ENCODE measurements at regions of chr11 and their contacts with region 1.

Region 1: DNA sequence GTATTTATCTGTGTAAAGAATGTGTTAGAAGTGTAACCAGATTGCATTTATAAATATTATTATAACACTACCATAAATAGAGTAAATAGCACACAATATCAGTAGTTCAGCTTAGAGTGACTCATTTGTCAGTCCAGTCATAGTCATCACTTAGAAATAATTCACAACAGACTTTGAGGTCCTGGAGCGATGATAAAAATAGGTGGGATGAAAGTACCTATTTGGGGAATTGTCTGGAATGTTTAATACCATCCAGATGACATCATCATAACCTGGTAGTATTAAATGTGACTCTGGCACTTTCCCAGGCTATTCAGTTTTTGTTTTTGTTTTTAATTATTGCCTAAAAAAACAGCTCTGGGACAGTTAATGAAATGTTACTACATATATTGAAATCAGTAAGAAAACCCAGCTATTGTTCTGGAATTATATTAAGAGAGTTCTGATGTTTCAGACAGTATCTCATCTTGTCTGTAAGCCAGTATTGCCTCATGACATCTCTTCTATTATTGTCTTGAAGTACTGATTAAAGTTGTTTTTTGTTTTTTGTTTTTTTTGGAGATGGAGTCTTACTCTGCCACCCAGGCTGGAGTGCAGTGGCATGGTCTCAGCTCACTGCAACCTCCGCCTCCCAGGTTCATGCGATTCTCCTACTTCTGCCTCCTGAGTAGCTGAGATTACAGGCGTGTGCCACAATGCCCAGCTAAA is 74.8 kb downstream of the SIK2 start:
- DNase-seq: peak; percentile 48
- H3K4me3 ChIP-seq: no peak overlapping the region
- H3K27ac ChIP-seq: no peak overlapping the region
- H3K4me1 ChIP-seq: peaks cover 7% of the 10 kb centered on the region
- H3K27me3 ChIP-seq: no peaks in the 10 kb centered on the region
- CTCF ChIP-seq: no peak
- POLR2A ChIP-seq: no peak

Region 2: GRCh38 chr11:111540114-111540936 is 136.7 kb before region 1 on chr11 and contains the start of gene LAYN:
- CTCF ChIA-PET with region 1: no interaction called
- POLR2A ChIA-PET with region 1: no interaction called
- dilution Hi-C with region 1: no loop called
- intact Hi-C with region 1: no loop called
- DNase-seq: no peak
- H3K4me3 ChIP-seq: peak within 1 kb of the TSS; percentile 6 to 44 (median 38)
- H3K27ac ChIP-seq: no peak within 1 kb of the TSS
- H3K4me1 ChIP-seq: peaks cover 17% of the 10 kb centered on the region
- H3K27me3 ChIP-seq: peaks cover 47 to 60% of the 10 kb centered on the region in 2 experiments
- CTCF ChIP-seq: no peak
- POLR2A ChIP-seq: no peak
- total RNA-seq, gene LAYN: 2.2 and 2.3 TPM in 2 replicates

Region 3: DNA sequence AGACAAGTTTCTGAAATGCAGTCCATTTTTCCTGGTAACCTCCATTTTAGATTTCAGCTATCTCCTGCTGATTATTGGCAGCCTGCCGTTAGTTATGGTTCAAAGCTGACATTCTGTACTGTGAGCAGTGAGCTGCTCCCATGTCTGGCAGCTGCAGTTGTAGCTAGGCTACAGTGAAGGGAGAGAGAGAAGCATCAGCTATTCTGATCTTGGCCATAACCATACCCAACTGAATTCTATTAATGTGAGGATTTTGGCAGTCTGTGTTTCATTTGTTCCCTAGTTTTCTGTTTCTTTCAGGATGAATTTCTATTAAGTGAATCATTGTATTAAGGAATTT is 41.4 kb before region 1 on chr11:
- CTCF ChIA-PET with region 1: no interaction called
- POLR2A ChIA-PET with region 1: no interaction called
- dilution Hi-C with region 1: no loop called
- intact Hi-C with region 1: loop called (anchors 2 kb)
- DNase-seq: no peak
- H3K4me3 ChIP-seq: no peak overlapping the region
- H3K27ac ChIP-seq: no peak overlapping the region
- H3K4me1 ChIP-seq: peaks cover 23% of the 10 kb centered on the region
- H3K27me3 ChIP-seq: no peaks in the 10 kb centered on the region
- CTCF ChIP-seq: no peak
- POLR2A ChIP-seq: no peak